ENCODE measurements at regions of chr1 and their contacts with region 1.

Region 1: GRCh38 chr1:234631721-234632125 is 21.7 kb upstream of the IRF2BP2 start:
- DNase-seq: peak in 1 of 3 donors; percentile 21
- ATAC-seq: peak; percentile 72 to 94
- H3K4me3 ChIP-seq: no peak overlapping the region
- H3K27ac ChIP-seq: peak overlapping the region; percentile 3
- H3K4me1 ChIP-seq: no peaks in the 10 kb centered on the region
- H3K27me3 ChIP-seq: no peaks in the 10 kb centered on the region

Region 2: GRCh38 chr1:234458352-234459017 is 173.2 kb before region 1 on chr1:
- intact Hi-C with region 1: no loop called
- DNase-seq: no peak
- ATAC-seq: no peak
- H3K4me3 ChIP-seq: no peak overlapping the region
- H3K27ac ChIP-seq: no peak overlapping the region
- H3K4me1 ChIP-seq: no peaks in the 10 kb centered on the region
- H3K27me3 ChIP-seq: no peaks in the 10 kb centered on the region

Region 3: GRCh38 chr1:234683861-234684632 is 52.3 kb after region 1 on chr1:
- intact Hi-C with region 1: loop called in 1 of 4 experiments (anchors 10 kb)
- DNase-seq: peak; percentile 65 to 78 (median 67)
- ATAC-seq: peak; percentile 94 to 98
- H3K4me3 ChIP-seq: no peak overlapping the region
- H3K27ac ChIP-seq: peak overlapping the region; percentile 78
- H3K4me1 ChIP-seq: peaks cover 2% of the 10 kb centered on the region
- H3K27me3 ChIP-seq: no peaks in the 10 kb centered on the region

Measured in right cardiac atrium (tissue), 5 donors.